BJ (cell line): ENCODE measurements at regions of chrX and their contacts with region 1.

Region 1: GRCh38 chrX:9163214-9163681 is 129.3 kb upstream of the FAM9B start:
- DNase-seq: no peak
- H3K4me3 ChIP-seq: no peak overlapping the region
- H3K27me3 ChIP-seq: no peaks in the 10 kb centered on the region
- CTCF ChIP-seq: no peak

Region 2: GRCh38 chrX:9117851-9118250 is 45.4 kb before region 1 on chrX:
- CTCF ChIA-PET with region 1: no interaction called
- POLR2A ChIA-PET with region 1: interaction called, 14 read pairs
- DNase-seq: no peak
- H3K4me3 ChIP-seq: no peak overlapping the region
- H3K27me3 ChIP-seq: no peaks in the 10 kb centered on the region
- CTCF ChIP-seq: no peak